ENCODE measurements at regions of chr18 and their contacts with region 1.

Region 1: GRCh38 chr18:76265497-76266235 is 229.4 kb downstream of the ZNF516 start:
- DNase-seq: peak; percentile 75 to 86 (median 79)
- H3K4me3 ChIP-seq: peak overlapping the region; percentile 30
- H3K27ac ChIP-seq: peak overlapping the region; percentile 82 to 97
- H3K4me1 ChIP-seq: peaks cover 24% of the 10 kb centered on the region
- H3K27me3 ChIP-seq: no peaks in the 10 kb centered on the region
- CTCF ChIP-seq: no peak
- EP300 ChIP-seq: no peak
- POLR2A ChIP-seq: no peak

Region 2: DNA sequence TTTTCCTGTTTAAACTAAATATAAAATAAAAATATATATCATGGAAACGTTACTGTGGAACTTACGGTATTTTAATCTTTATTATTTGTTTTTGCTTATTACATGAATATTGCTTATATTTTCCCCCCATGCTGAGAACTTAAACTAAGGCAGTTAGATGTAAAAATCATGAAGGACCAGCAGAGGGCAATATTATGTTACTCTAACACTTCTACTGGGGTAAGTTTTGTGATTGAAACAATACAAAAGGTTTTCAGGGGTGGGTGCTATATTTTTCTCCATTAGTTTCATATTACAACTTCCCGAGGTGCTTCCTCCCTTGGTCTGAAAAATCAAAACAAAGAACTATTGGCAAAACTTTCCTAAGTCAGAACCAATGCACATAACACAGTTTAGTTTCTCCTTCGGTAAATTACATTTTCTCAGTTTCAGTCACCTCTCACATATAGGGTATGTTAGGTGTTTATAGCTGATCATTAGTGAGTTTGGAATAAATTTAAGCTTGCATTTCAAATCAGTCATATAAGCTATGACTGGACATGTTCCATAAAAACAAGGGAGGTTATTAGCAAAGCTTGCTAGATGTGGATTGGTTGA is 1613.2 kb before region 1 on chr18:
- intact Hi-C with region 1: loop called in 1 of 4 experiments (anchors 10 kb)
- DNase-seq: no peak
- H3K4me3 ChIP-seq: no peak overlapping the region
- H3K27ac ChIP-seq: no peak overlapping the region
- H3K4me1 ChIP-seq: no peaks in the 10 kb centered on the region
- H3K27me3 ChIP-seq: no peaks in the 10 kb centered on the region
- CTCF ChIP-seq: peak in 2 of 3 donors; percentile 36 to 61
- EP300 ChIP-seq: no peak
- POLR2A ChIP-seq: no peak

Region 3: DNA sequence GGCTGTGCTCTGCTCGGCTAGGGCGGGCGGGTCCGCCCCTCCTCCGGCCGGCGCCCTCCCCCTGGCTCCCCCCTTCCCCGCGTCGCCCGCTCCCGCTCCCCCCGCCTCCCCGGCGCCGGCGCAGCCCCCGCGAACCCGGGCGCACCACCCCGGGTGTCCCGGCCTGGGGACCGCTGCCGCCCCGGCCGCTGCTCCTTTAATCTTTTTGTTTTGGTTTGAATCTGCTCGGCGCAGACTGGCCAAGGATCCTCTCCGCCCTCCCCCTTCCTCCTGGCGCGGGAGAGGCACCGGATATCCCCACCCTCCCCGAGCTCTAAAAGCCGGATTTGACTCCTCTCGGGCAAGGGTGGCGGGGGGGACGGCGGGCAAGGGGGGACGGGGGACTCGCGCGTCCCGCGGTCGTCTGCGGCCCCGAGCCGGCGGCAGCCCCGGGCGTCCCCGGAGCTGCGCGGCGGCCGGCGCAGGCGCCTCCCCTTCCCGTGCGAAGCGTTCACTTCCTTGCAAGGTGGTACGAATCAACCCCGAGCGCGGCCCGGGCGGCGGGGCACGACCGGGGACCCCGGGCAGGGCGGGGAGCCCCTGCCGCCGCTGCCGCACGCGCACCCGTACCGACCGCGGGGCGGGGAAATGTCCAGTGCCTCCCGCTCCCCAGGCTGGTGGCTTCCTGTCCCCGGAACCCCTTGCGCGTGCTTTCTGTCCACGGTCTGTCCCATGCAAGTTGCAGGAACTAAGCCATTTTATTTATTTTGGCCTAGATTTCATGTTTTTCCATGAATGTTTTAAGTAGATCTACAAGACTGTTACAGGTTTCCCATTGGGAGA is 1056.3 kb before region 1 on chr18 and contains the start of gene PTGR3:
- intact Hi-C with region 1: loop called in 1 of 4 experiments (anchors 10 kb)
- DNase-seq: peak; percentile 86 to 89 (median 87)
- H3K4me3 ChIP-seq: peak within 1 kb of the TSS; percentile 97
- H3K27ac ChIP-seq: peak within 1 kb of the TSS; percentile 87 to 99
- H3K4me1 ChIP-seq: peaks cover 4% of the 10 kb centered on the region
- H3K27me3 ChIP-seq: no peaks in the 10 kb centered on the region
- CTCF ChIP-seq: no peak
- EP300 ChIP-seq: no peak
- POLR2A ChIP-seq: peak; percentile 27
- total RNA-seq, gene PTGR3: 15.4 to 55.7 (median 32.6) TPM

Region 4: DNA sequence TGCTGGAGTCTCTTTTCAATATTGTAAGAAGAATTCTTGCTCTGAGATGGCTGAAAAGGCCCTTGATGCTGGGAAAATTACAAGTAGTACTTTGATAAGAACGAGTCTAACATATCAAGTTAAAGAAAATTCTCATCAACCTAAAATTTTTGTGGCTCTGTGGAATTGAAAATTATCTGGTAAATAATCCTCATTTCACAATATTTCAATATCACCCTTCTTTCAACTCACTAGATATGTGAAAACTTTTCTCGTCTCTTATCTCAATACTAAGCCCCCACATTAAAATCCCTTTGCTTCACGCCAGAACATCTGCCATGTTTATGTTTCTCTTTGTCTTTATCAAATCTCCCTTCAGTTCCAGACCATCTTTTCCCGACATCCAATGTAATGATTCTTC is 219.4 kb before region 1 on chr18:
- intact Hi-C with region 1: loop called in 1 of 4 experiments (anchors 5 kb)
- DNase-seq: no peak
- H3K4me3 ChIP-seq: no peak overlapping the region
- H3K27ac ChIP-seq: peak overlapping the region in 1 of 2 donors; percentile 75
- H3K4me1 ChIP-seq: peaks cover 7% of the 10 kb centered on the region
- H3K27me3 ChIP-seq: no peaks in the 10 kb centered on the region
- CTCF ChIP-seq: no peak
- EP300 ChIP-seq: no peak
- POLR2A ChIP-seq: no peak

Region 5: DNA sequence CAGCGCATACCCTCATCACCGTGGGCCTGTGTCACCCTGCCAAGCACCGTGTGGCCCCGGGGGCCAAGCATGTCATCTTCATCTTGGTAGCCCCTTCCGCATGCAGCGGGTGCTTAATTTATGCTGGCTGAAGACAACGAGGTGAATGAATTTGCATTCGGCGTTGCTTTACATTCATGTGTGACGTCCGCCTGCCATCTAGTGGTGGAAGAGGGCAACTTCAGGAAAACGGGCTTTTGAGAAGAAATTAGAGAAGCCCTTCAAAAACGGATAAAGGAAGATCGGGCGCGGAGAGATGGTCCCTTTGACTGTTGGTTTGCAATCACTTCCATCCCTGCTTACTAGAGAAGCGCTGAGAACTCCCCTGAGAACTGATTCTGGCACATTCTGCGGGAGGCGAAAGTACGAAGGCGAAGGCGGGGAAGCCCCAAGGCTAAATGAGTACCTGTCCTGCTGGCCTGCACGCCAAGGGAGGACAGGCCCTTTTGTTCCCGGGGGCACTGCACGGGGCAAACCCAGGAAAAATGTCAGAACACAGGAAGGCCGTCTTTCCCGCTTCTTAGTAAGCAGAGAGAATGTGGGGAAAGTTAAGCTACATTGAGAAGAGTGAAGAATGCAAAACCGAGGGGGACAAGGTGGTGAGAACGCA is 83.5 kb after region 1 on chr18:
- intact Hi-C with region 1: loop called in 1 of 4 experiments (anchors 5 kb)
- DNase-seq: peak; percentile 64 to 83 (median 78)
- H3K4me3 ChIP-seq: no peak overlapping the region
- H3K27ac ChIP-seq: no peak overlapping the region
- H3K4me1 ChIP-seq: peaks cover 3% of the 10 kb centered on the region
- H3K27me3 ChIP-seq: no peaks in the 10 kb centered on the region
- CTCF ChIP-seq: peak; percentile 62 to 90 (median 89)
- EP300 ChIP-seq: no peak
- POLR2A ChIP-seq: no peak

Measured in ovary (tissue), 10 donors.